ENCODE measurements at regions of chr2 and their contacts with region 1.

Region 1: GRCh38 chr2:234881413-234882241 is 70.2 kb upstream of the SH3BP4 start:
- DNase-seq: peak; percentile 92
- H3K4me3 ChIP-seq: peak overlapping the region in 1 of 3 experiments; percentile 12
- H3K27ac ChIP-seq: peak overlapping the region; percentile 79
- H3K4me1 ChIP-seq: peaks cover 23% of the 10 kb centered on the region
- H3K27me3 ChIP-seq: no peaks in the 10 kb centered on the region
- CTCF ChIP-seq: peak; percentile 87 to 91
- POLR2A ChIP-seq: peak; percentile 23

Region 2: GRCh38 chr2:234550511-234551107 is 331.0 kb before region 1 on chr2:
- CTCF ChIA-PET with region 1: interaction called, 7 read pairs
- POLR2A ChIA-PET with region 1: no interaction called
- dilution Hi-C with region 1: no loop called
- intact Hi-C with region 1: loop called (anchors 2 kb)
- DNase-seq: peak; percentile 76
- H3K4me3 ChIP-seq: no peak overlapping the region
- H3K27ac ChIP-seq: no peak overlapping the region
- H3K4me1 ChIP-seq: no peaks in the 10 kb centered on the region
- H3K27me3 ChIP-seq: peaks cover 0 to 6% of the 10 kb centered on the region in 2 experiments
- CTCF ChIP-seq: peak; percentile 84 to 87
- POLR2A ChIP-seq: no peak

Region 3: DNA sequence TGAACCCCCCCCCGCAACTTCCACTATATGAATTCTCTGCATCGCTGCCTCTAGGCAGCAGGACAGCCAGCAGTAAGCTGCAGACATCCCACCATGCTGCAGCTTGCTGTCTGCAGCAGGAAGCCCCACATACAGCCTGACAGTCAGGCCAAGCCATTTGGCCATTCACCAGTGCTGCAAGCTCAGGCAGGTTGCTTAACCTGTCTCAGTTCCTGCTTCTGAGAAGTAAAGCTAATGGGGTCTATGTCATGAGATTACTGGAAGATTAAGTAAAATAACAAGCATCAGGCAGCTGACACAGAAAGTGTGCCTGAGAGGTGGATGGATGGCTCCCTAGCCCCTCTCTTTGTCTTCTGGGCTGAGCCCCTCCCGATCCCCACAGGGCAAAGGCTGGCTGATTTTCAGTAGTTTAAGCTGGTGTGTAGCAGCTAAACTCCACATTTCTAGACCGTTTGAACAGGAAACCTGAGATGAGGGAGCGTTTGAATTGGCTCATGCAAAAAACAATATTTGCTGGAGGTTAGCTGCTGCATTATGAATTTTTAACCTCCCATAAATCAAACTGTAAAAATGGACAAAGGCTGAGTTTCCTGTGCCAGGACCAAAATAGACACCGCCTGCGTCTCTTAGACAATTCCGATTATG is 190.9 kb before region 1 on chr2:
- CTCF ChIA-PET with region 1: interaction called, 7 read pairs
- POLR2A ChIA-PET with region 1: no interaction called
- dilution Hi-C with region 1: no loop called
- intact Hi-C with region 1: loop called (anchors 1 kb)
- DNase-seq: peak; percentile 97
- H3K4me3 ChIP-seq: no peak overlapping the region
- H3K27ac ChIP-seq: peak overlapping the region; percentile 75
- H3K4me1 ChIP-seq: peaks cover 40% of the 10 kb centered on the region
- H3K27me3 ChIP-seq: no peaks in the 10 kb centered on the region
- CTCF ChIP-seq: no peak
- POLR2A ChIP-seq: no peak

Region 4: GRCh38 chr2:234840336-234840735 is 41.3 kb before region 1 on chr2:
- CTCF ChIA-PET with region 1: interaction called, 54 read pairs
- POLR2A ChIA-PET with region 1: no interaction called
- dilution Hi-C with region 1: no loop called
- intact Hi-C with region 1: loop called (anchors 1 kb)
- DNase-seq: peak; percentile 95
- H3K4me3 ChIP-seq: no peak overlapping the region
- H3K27ac ChIP-seq: peak overlapping the region; percentile 62
- H3K4me1 ChIP-seq: peaks cover 19% of the 10 kb centered on the region
- H3K27me3 ChIP-seq: no peaks in the 10 kb centered on the region
- CTCF ChIP-seq: no peak
- POLR2A ChIP-seq: no peak

Region 5: DNA sequence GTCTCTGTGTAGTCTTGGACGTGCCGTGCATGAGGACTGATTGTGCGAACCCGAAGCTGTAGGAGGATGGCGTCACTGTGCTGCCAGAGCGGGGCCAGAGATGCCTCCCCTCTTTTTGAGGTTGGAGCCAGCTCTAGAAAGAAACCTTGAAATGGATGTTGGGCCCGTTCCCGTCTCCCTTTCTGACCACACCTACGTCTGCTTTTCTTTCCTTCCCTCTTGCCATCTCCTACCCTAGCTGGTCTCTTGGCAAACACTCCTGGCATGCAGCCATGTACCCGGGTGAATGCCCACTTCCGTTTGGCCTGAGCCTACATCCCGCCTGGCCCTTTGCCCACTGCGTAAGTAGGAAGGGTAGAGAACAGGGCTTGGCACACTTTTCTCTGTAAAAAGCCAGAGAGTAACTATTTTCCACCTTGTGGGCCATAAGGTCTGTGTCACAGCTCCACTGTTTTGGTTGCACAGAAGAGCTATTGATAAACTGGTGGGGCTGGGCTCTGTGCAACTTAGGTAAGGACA is 107.6 kb after region 1 on chr2:
- CTCF ChIA-PET with region 1: interaction called, 3 read pairs
- POLR2A ChIA-PET with region 1: no interaction called
- dilution Hi-C with region 1: no loop called
- intact Hi-C with region 1: loop called (anchors 2 kb)
- DNase-seq: peak; percentile 86
- H3K4me3 ChIP-seq: no peak overlapping the region
- H3K27ac ChIP-seq: peak overlapping the region; percentile 78
- H3K4me1 ChIP-seq: peaks cover 58% of the 10 kb centered on the region
- H3K27me3 ChIP-seq: no peaks in the 10 kb centered on the region
- CTCF ChIP-seq: no peak
- POLR2A ChIP-seq: no peak

Region 6: DNA sequence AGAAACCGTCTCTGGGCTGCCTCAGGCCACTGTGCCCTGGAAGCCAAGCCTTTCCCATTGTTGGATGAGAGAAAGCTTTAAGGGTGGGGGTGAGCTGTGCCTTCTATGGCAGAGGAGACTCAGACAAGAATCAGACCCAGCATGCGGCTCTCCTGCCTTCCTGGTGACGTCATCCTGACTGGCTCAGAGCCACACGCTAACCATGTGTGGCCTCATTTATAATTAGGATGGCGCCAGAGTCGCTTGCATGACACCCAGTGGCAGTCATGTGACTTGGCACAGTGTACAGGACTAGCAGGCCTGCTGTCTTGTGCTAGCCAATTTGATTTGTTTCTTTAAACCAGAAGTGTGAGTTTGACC is 169.3 kb after region 1 on chr2:
- CTCF ChIA-PET with region 1: interaction called, 13 read pairs
- POLR2A ChIA-PET with region 1: no interaction called
- dilution Hi-C with region 1: no loop called
- intact Hi-C with region 1: loop called (anchors 1 kb)
- DNase-seq: peak; percentile 88
- H3K4me3 ChIP-seq: no peak overlapping the region
- H3K27ac ChIP-seq: peak overlapping the region; percentile 69
- H3K4me1 ChIP-seq: peaks cover 28% of the 10 kb centered on the region
- H3K27me3 ChIP-seq: no peaks in the 10 kb centered on the region
- CTCF ChIP-seq: peak in 1 of 2 donors; percentile 10
- POLR2A ChIP-seq: no peak